Esophagus muscularis mucosa (tissue), 4 donors: ENCODE measurements at regions of chr3 and their contacts with region 1.

Region 1: GRCh38 chr3:179322286-179323196 is at the start of gene ZNF639:
- DNase-seq: peak; percentile 95
- H3K4me3 ChIP-seq: peak within 1 kb of the TSS; percentile 69 to 93 (median 78)
- H3K27ac ChIP-seq: peak within 1 kb of the TSS; percentile 93 to 98 (median 98)
- H3K4me1 ChIP-seq: peaks cover 17 to 53% (median 49%) of the 10 kb centered on the region in 4 donors
- H3K27me3 ChIP-seq: no peaks in the 10 kb centered on the region
- CTCF ChIP-seq: peak; percentile 80 to 91 (median 87)
- EP300 ChIP-seq: no peak
- POLR2A ChIP-seq: peak; percentile 38
- total RNA-seq, gene ZNF639: 50.0 to 78.2 (median 58.8) TPM

Region 2: GRCh38 chr3:179015551-179016020 is 307.0 kb before region 1 on chr3:
- intact Hi-C with region 1: loop called (anchors 2 kb)
- DNase-seq: no peak
- H3K4me3 ChIP-seq: no peak overlapping the region
- H3K27ac ChIP-seq: no peak overlapping the region
- H3K4me1 ChIP-seq: peaks cover 0 to 11% (median 10%) of the 10 kb centered on the region in 4 donors
- H3K27me3 ChIP-seq: no peaks in the 10 kb centered on the region
- CTCF ChIP-seq: peak; percentile 83 to 92 (median 84)
- EP300 ChIP-seq: no peak
- POLR2A ChIP-seq: no peak

Region 3: GRCh38 chr3:179347345-179348194 is 25.0 kb after region 1 on chr3 and contains the start of gene MFN1:
- intact Hi-C with region 1: loop called (anchors 2 kb)
- DNase-seq: peak; percentile 99
- H3K4me3 ChIP-seq: peak within 1 kb of the TSS; percentile 77 to 94 (median 88)
- H3K27ac ChIP-seq: peak within 1 kb of the TSS; percentile 88 to 91 (median 88)
- H3K4me1 ChIP-seq: peaks cover 13 to 24% (median 15%) of the 10 kb centered on the region in 4 donors
- H3K27me3 ChIP-seq: no peaks in the 10 kb centered on the region
- CTCF ChIP-seq: no peak
- EP300 ChIP-seq: no peak
- POLR2A ChIP-seq: no peak
- total RNA-seq, gene MFN1: 32.8 to 48.6 (median 37.3) TPM